Head of caudate nucleus (tissue), 42 donors: ENCODE measurements at regions of chr7 and their contacts with region 1.

Region 1: GRCh38 chr7:101815835-101816493 is 1.5 kb upstream of the CUX1 start:
- DNase-seq: peak; percentile 19 to 84 (median 68)

Region 2: GRCh38 chr7:101602484-101603241 is 213.3 kb before region 1 on chr7:
- intact Hi-C with region 1: no loop called
- DNase-seq: peak; percentile 50 to 88 (median 78)

Region 3: DNA sequence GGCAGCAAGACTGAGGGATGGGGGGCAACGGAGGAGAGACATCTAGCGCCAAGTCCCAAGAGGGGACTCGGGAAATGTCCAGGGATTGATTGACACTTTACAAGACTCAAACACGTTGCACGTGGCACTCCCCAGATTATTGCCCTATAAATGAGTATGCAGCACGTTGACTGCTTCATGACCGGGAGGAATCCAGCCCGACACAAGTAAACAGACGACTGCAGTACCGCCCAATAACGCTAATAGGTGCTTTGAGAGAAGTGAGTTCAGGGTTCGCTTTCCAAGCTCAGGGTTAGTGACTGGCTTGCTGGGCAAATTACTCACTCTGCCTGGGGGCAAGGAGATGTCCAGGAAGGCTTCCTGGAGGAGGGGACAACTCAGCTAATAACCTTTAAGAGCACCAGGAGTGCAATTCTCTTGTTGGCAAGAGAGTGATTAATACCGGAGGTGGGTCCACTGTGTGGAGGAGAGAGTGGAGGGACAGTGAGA is 113.6 kb before region 1 on chr7:
- intact Hi-C with region 1: no loop called
- DNase-seq: no peak

Region 4: GRCh38 chr7:102111061-102111743 is 295.2 kb after region 1 on chr7:
- intact Hi-C with region 1: loop called (anchors 10 kb)
- DNase-seq: peak in 40 of 42 donors; percentile 25 to 75 (median 56)

Region 5: DNA sequence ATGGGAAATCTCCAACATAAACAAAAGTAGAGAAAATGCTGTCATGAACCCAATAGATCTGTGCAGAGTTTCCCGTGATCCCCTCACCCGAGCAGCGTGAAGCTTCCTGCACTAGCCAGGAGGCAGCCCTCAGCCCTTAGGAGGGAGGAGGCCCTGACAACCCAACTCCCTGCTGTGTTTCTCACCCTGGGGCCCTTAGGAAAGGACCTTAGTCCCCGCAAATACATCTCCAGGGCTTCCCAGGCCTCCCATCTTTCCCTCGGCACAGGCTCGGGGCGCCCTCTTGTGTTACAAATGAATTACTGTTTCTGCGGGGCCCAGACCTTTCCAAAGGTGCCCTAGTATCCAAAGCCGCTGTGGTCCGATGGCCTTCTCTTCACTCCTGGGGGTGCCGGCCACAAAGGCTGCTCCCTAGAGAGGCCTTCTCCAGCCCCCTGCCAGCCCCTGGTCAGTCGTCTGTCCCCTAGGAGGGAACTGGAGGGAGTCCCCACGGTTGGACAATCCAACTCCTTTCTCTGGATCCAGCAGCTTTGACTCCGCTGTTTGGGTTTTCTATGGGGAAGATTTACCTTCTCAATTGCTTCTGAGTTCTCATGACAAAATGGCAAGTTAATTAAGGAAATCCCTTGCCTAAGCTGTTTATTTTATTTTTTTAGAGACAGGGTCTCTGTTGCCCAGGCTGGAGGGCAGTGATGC is 420.8 kb after region 1 on chr7:
- intact Hi-C with region 1: loop called (anchors 10 kb)
- DNase-seq: peak; percentile 41 to 89 (median 74)